ENCODE measurements at regions of chr1 and their contacts with region 1.

Region 1: GRCh38 chr1:65419681-65420589 is 533 bp upstream of the LEPR start:
- DNase-seq: peak; percentile 98
- ATAC-seq: peak; percentile 84 to 85
- H3K4me3 ChIP-seq: peak overlapping the region; percentile 58 to 86 (median 72)
- H3K27ac ChIP-seq: peak overlapping the region; percentile 94 to 97 (median 96)
- H3K4me1 ChIP-seq: peaks cover 22 to 30% of the 10 kb centered on the region in 2 donors
- H3K27me3 ChIP-seq: no peaks in the 10 kb centered on the region
- CTCF ChIP-seq: no peak
- POLR2A ChIP-seq: peak; percentile 22 to 26

Region 2: GRCh38 chr1:65254319-65255034 is 165.5 kb before region 1 on chr1:
- in situ Hi-C with region 1: no loop called
- intact Hi-C with region 1: loop called (anchors 5 kb)
- DNase-seq: peak; percentile 44 to 52
- ATAC-seq: peak; percentile 93 to 96
- H3K4me3 ChIP-seq: peak overlapping the region; percentile 64 to 89 (median 70)
- H3K27ac ChIP-seq: peak overlapping the region in 2 of 4 donors; percentile 10 to 40
- H3K4me1 ChIP-seq: peaks cover 6 to 11% of the 10 kb centered on the region in 2 donors
- H3K27me3 ChIP-seq: peaks cover 0 to 2% (median 0%) of the 10 kb centered on the region in 3 donors
- CTCF ChIP-seq: peak in 1 of 5 experiments; percentile 20
- POLR2A ChIP-seq: peak; percentile 57 to 64

Region 3: GRCh38 chr1:65514083-65514482 is 94.1 kb after region 1 on chr1:
- in situ Hi-C with region 1: no loop called
- intact Hi-C with region 1: loop called (anchors 1 kb)
- DNase-seq: peak; percentile 38 to 44
- ATAC-seq: peak; percentile 96 to 97
- H3K4me3 ChIP-seq: no peak overlapping the region
- H3K27ac ChIP-seq: peak overlapping the region; percentile 31 to 63 (median 54)
- H3K4me1 ChIP-seq: peaks cover 18 to 26% of the 10 kb centered on the region in 2 donors
- H3K27me3 ChIP-seq: no peaks in the 10 kb centered on the region
- CTCF ChIP-seq: no peak
- POLR2A ChIP-seq: no peak

Region 4: DNA sequence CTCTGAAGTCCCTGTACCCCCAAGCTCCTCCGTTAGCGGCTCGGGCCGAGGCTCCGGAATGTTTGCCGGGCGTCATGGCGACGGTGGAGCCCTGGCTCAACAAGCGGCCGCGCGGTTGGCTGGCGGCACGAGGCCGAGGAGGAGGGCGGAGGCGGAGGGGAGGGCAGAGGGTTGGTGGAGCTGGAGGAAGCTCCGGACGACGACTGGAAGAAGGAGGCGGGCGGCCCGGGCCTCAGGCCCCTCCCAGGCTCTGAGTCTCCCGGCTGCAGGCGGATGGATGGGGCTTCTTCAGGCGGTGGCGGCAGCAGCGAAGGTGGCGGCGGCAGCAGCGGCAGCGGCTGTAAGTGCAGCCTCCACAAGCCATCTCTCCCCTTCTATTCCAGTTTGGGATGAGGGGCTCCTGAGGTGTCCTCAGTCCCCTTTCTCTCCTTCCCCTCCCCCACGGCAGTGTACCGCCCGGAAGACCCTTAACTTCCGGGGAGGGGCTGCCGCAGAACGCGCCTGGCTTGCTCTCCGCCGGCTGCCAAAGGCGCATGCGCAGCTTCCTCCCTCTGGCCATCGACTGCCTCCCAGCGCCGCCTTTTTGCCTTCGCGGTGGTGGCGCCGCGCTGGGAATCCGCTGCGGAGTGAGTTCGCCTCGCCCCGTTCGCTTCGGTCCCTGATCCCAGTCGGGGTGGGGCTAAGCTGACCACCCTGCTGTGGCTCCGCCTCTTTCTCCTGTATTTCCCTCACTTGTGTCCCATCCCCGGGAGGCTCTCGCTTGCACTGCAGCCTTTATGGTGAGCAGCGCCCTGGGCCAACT is 1505.0 kb after region 1 on chr1 and contains the starts of genes DNAI4 and MIER1:
- in situ Hi-C with region 1: no loop called
- intact Hi-C with region 1: loop called (anchors 5 kb)
- DNase-seq: peak; percentile 96 to 97
- ATAC-seq: peak; percentile 93 to 96
- H3K4me3 ChIP-seq: peak within 1 kb of the TSS; percentile 69 to 96 (median 86)
- H3K27ac ChIP-seq: peak within 1 kb of the TSS; percentile 85 to 97 (median 92)
- H3K4me1 ChIP-seq: peaks cover 29 to 35% of the 10 kb centered on the region in 2 donors
- H3K27me3 ChIP-seq: no peaks in the 10 kb centered on the region
- CTCF ChIP-seq: peak; percentile 23 to 41 (median 25)
- POLR2A ChIP-seq: peak; percentile 56 to 68
- total RNA-seq, gene DNAI4: 0.19 to 0.41 (median 0.29) TPM in 3 of 4 donors, not detected in the other
- total RNA-seq, gene MIER1: 14.8 to 21.7 (median 15.4) TPM

Measured in gastrocnemius medialis (tissue), 4 donors.